Heart left ventricle (tissue), 16 donors: ENCODE measurements at regions of chr2 and their contacts with region 1.

Region 1: GRCh38 chr2:209960676-209961630 is 41.5 kb upstream of the RPE start:
- DNase-seq: peak in 4 of 5 donors; percentile 12 to 31 (median 28)
- ATAC-seq: peak in 3 of 4 donors; percentile 42 to 69 (median 60)
- H3K4me3 ChIP-seq: no peak overlapping the region
- H3K27ac ChIP-seq: no peak overlapping the region
- H3K4me1 ChIP-seq: no peaks in the 10 kb centered on the region
- H3K27me3 ChIP-seq: no peaks in the 10 kb centered on the region
- CTCF ChIP-seq: peak; percentile 42 to 78 (median 56)
- POLR2A ChIP-seq: no peak

Region 2: GRCh38 chr2:209565896-209566582 is 394.9 kb before region 1 on chr2:
- intact Hi-C with region 1: loop called in 3 of 10 experiments (anchors 10 kb)
- DNase-seq: no peak
- ATAC-seq: no peak
- H3K4me3 ChIP-seq: no peak overlapping the region
- H3K27ac ChIP-seq: no peak overlapping the region
- H3K4me1 ChIP-seq: no peaks in the 10 kb centered on the region
- H3K27me3 ChIP-seq: no peaks in the 10 kb centered on the region
- CTCF ChIP-seq: no peak
- POLR2A ChIP-seq: no peak

Region 3: DNA sequence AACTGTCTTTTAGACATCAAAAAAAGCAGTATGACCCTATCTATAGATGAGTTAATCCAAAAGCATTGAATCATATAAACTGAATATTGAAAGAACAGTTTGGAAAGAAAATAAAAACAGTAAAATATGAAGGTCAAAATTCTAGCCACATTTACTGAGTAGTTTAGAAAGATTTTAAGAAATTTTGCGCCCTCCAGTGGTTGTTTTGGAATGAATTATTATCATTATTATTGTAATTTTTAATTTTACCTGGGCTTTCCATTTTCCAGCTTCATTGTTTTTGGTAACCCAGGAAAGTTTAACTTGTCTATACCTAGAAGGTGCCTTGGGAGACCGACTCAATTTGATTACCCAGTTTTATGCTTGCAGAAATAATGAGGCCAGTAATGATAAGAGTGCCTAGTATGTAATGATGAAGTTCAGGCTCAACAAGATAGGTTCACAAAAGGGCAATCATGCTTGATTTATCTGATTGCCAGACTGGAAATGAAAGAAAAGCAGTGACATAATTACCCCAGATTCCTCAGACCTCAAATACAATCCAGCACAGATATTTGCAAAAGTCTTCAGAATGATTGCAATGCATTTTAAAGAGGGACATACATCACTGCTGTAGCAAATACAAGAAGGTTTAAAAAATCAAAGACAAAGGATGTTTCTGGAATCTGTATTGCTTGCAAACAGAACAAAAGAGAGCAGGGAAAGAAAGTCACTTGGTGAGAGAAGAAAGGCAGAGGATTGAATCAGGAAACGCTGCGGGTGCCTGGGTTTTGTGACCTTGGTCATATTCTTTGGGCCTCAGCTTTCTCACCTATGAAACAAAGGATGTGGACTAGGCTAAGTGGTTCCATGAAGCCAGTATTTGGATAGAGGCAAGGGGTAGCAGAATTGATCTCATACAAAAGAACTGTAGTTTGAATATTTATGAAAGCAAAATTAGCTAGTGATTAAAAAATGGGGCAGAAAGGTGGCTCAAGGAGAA is 383.3 kb before region 1 on chr2:
- intact Hi-C with region 1: loop called in 2 of 10 experiments (anchors 10 kb)
- DNase-seq: no peak
- ATAC-seq: no peak
- H3K4me3 ChIP-seq: no peak overlapping the region
- H3K27ac ChIP-seq: no peak overlapping the region
- H3K4me1 ChIP-seq: peaks cover 0 to 11% (median 1%) of the 10 kb centered on the region in 12 donors
- H3K27me3 ChIP-seq: no peaks in the 10 kb centered on the region
- CTCF ChIP-seq: peak; percentile 12 to 52 (median 36)
- POLR2A ChIP-seq: no peak

Region 4: DNA sequence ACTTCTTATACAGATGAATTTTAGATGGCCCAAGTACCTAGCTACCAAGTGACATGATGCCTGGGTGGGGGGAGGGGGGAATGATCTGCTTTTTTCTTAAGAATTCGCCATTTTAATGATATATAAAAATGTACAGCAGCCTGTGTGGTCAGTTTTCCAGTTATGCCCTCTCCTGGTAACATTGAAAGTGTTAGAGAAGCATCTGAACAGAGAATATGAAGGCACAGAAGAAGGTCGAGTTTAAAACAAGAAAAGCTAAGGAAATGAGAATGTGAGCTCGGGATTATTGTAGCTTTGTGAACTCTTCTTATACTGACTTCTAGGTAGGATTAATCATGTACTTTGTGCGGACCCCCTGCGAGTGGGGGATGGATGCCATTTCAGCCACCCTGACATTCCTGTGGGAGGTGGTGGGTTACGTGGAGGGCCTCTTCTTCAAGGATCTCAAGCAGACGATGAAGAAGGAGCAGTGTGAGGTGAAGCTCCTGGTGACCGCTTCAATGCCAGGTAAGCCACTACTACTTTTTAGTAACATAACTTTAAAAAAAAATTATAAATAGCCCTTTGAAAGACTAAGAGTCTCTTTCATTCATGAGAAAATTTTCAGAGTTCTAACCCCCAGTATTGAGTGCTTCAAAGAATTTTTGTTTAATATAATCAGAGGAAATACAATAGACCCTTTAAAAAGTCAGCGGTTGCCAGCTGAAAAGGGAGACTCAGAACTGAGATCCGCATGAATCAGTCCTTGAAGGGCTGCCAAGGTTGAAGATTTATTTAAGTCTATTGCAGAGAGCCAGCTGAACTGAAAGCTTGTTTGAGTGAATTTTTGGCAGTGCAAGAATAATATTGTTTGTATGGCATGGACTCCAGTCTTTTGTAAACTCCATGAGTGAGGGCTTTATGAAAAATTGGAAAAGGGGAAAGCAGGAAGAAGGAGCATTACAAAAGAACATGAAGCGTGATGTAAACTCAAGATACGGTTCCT is 27.2 kb before region 1 on chr2:
- intact Hi-C with region 1: no loop called
- DNase-seq: peak in 1 of 5 donors; percentile 11
- ATAC-seq: peak in 2 of 4 donors; percentile 14 to 41
- H3K4me3 ChIP-seq: no peak overlapping the region
- H3K27ac ChIP-seq: no peak overlapping the region
- H3K4me1 ChIP-seq: peaks cover 0 to 6% (median 0%) of the 10 kb centered on the region in 12 donors
- H3K27me3 ChIP-seq: peaks cover 0 to under 1% (median 0%) of the 10 kb centered on the region in 9 donors
- CTCF ChIP-seq: no peak
- POLR2A ChIP-seq: no peak

Region 5: GRCh38 chr2:210002158-210003157 is 41.5 kb after region 1 on chr2 and contains the start of gene RPE:
- intact Hi-C with region 1: no loop called
- DNase-seq: peak; percentile 96 to 98 (median 97)
- ATAC-seq: peak; percentile 100
- H3K4me3 ChIP-seq: peak within 1 kb of the TSS; percentile 81 to 98 (median 92)
- H3K27ac ChIP-seq: peak within 1 kb of the TSS; percentile 35 to 93 (median 85)
- H3K4me1 ChIP-seq: peaks cover 8 to 50% (median 31%) of the 10 kb centered on the region in 12 donors
- H3K27me3 ChIP-seq: no peaks in the 10 kb centered on the region
- CTCF ChIP-seq: no peak
- POLR2A ChIP-seq: peak in 1 of 2 donors; percentile 56
- total RNA-seq, gene RPE: 10.7 to 29.8 (median 17.0) TPM